ENCODE measurements at regions of chr6 and their contacts with region 1.

Region 1: GRCh38 chr6:113909234-113909856 is 52.2 kb downstream of the MARCKS start:
- DNase-seq: no peak
- ATAC-seq: no peak
- H3K4me3 ChIP-seq: no peak overlapping the region
- H3K27ac ChIP-seq: no peak overlapping the region
- H3K4me1 ChIP-seq: no peaks in the 10 kb centered on the region
- H3K27me3 ChIP-seq: no peaks in the 10 kb centered on the region

Region 2: GRCh38 chr6:112780498-112781096 is 1128.7 kb before region 1 on chr6:
- intact Hi-C with region 1: loop called (anchors 5 kb)
- DNase-seq: peak; percentile 73 to 76
- ATAC-seq: peak; percentile 93
- H3K4me3 ChIP-seq: no peak overlapping the region
- H3K27ac ChIP-seq: no peak overlapping the region
- H3K4me1 ChIP-seq: peaks cover 0 to 2% of the 10 kb centered on the region in 2 donors
- H3K27me3 ChIP-seq: no peaks in the 10 kb centered on the region

Measured in aorta (tissue), 5 donors.